ENCODE measurements at regions of chr17 and their contacts with region 1.

Region 1: GRCh38 chr17:32486111-32486700 is 587 bp upstream of the CDK5R1 start:
- DNase-seq: peak; percentile 91
- CTCF ChIP-seq: no peak

Region 2: DNA sequence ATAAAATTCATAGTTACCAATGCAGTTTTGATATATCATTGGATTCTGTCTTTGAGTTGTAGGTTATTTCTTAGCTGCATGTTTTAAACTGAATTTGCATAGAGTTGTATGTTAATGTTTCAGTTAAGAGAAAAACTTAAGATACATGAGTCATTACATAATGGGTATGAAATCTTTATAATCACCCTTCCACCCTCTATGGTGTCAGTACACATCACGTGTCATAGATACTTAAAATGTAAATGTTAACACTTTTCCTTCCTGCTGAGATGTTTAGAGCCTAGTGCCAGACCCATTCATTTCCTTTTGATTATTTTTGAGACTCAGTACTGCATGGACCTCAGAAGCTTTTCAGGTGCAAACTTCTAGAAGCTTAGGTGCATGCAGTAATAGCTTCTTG is 115.8 kb before region 1 on chr17:
- CTCF ChIA-PET with region 1: no interaction called
- POLR2A ChIA-PET with region 1: no interaction called
- DNase-seq: no peak
- CTCF ChIP-seq: no peak

Region 3: DNA sequence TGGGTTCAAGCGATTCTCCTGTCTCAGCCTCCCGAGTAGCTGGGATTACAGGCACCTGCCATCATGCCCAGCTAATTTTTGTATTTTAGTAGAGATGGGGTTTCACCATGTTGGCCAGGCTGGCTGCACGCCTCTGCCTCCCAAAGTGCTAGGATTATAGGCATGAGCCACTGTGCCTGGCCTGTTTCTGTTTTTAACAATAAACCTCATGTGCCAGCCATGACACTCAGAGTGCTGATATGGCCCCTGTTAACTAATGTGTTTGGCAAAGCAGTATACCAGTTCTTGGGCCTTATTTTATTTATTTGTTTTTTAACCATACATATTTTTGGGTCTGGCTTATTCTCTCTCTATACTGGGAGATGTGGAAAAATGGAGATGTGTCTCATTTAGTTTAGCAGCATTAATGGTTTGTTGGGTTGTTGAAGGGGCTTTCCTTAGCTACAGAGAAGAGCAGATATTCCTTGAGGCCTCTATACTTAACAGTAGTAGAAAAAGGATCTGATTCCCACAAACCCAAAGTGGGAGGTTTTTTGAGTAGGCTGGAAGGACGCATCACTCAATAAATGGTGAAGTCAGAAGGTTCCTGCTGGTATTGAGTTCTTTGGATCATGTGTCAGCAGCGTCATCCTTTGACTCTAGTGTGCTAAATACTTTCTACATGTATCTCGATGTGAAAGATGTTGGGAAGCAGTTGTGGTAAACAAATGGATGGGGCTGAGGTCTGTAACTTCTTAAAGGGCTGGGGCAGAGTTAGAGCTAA is 15.6 kb before region 1 on chr17:
- CTCF ChIA-PET with region 1: interaction called, 177 read pairs
- POLR2A ChIA-PET with region 1: no interaction called
- DNase-seq: no peak
- CTCF ChIP-seq: no peak

Region 4: GRCh38 chr17:32523017-32523680 is 36.9 kb after region 1 on chr17:
- CTCF ChIA-PET with region 1: interaction called, 13 read pairs
- POLR2A ChIA-PET with region 1: interaction called, 4 read pairs
- DNase-seq: peak; percentile 77
- CTCF ChIP-seq: no peak

Region 5: GRCh38 chr17:32755045-32755805 is 269.0 kb after region 1 on chr17:
- CTCF ChIA-PET with region 1: interaction called, 25 read pairs
- POLR2A ChIA-PET with region 1: no interaction called
- DNase-seq: peak; percentile 34
- CTCF ChIP-seq: peak; percentile 31

Measured in GM10248 (cell line).